Dorsolateral prefrontal cortex (tissue), 120 donors: ENCODE measurements at regions of chr12 and their contacts with region 1.

Region 1: GRCh38 chr12:124474709-124475108 is 92.7 kb downstream of the NCOR2 start:
- DNase-seq: peak; percentile 54 to 97 (median 94)
- H3K4me3 ChIP-seq: no peak overlapping the region
- H3K27ac ChIP-seq: peak overlapping the region; percentile 49 to 97 (median 90)
- H3K27me3 ChIP-seq: no peaks in the 10 kb centered on the region
- CTCF ChIP-seq: peak in 43 of 56 donors; percentile 15 to 64 (median 40)

Region 2: DNA sequence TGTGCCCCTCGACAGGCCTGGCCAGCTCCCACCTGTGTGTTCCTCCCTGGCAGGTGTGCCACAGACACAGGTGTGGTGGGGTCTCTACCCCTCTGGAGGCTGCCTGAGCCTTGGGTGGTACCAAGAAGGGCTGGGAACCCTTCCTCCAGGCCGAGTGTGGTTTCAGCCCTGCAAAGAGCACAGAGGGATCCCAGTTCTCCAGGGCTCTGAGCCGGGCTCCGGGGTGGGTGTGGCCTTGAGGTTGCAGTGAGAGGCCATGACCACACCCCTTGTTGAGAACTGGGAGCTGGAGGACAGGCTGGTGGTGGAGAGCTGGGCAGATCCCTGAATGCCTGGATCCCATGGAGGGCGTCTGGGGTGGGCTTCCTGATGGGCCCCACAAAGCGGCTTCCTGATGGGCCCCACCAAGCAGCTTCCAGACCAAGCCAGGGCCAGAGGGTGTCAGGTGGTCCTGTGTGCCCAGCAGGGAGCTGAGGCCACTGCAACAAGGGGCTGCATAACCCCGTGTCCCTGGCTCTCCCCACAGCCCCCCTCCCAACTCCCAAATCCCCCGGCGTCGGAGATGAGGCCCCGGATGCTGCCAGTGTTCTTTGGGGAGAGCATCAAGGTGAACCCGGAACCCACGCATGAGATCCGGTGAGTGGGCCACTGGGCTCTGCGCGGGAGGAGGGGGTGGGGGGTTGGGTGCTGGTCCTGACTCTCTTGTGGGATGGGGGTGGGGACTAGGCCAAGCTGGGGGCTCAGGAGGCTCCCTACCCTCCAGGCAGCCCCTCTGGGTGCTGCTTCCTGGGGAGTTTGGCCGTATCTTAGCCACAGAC is 163.2 kb before region 1 on chr12:
- intact Hi-C with region 1: no loop called
- DNase-seq: no peak
- H3K4me3 ChIP-seq: no peak overlapping the region
- H3K27ac ChIP-seq: no peak overlapping the region
- H3K27me3 ChIP-seq: no peaks in the 10 kb centered on the region
- CTCF ChIP-seq: no peak

Region 3: GRCh38 chr12:124490584-124491308 is 16.0 kb after region 1 on chr12:
- intact Hi-C with region 1: loop called in 1 of 2 experiments (anchors 1 kb)
- DNase-seq: peak; percentile 71 to 92 (median 76)
- H3K4me3 ChIP-seq: no peak overlapping the region
- H3K27ac ChIP-seq: peak overlapping the region in 45 of 59 donors; percentile 3 to 78 (median 51)
- H3K27me3 ChIP-seq: no peaks in the 10 kb centered on the region
- CTCF ChIP-seq: no peak

Region 4: GRCh38 chr12:124512667-124513296 is 38.1 kb after region 1 on chr12:
- intact Hi-C with region 1: loop called in 1 of 2 experiments (anchors 2 kb)
- DNase-seq: peak in 8 of 10 donors; percentile 72 to 86 (median 81)
- H3K4me3 ChIP-seq: peak overlapping the region in 19 of 59 donors; percentile 2 to 37 (median 17)
- H3K27ac ChIP-seq: peak overlapping the region; percentile 46 to 100 (median 89)
- H3K27me3 ChIP-seq: no peaks in the 10 kb centered on the region
- CTCF ChIP-seq: peak in 1 of 56 donors; percentile 14

Region 5: DNA sequence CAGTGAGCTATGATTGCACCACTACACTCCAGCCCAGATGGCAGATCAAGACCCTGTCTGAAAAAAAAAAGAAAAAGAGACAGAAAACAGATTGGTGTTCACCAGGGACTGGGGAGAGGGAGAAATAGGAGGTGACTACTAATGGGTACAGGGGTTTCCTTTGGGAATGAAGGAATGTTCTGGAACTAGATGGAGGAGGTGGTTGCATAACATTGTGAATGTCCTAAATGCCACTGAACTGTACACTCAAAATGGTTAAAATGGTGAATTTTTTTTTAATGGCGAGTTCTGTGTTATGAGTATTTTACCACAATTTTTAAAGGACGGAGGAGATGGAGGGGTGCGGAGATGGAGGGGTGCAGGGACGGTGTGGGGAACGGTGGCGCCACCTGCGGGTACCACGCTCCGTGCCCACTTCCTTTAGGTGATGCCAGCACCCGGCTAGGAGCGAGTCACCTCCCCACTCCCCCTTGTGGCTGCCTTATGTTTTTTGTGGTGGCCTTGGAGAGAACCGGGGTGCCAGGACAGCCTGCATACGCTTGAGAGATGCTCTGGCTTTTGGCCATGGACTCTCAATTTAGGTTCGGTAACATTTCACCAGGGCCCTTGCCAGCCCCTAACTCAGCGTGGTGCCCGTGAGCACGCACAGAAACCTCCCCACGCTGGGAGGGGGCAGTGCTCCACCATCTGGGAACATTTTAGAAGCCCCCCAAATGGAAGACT is 423.7 kb after region 1 on chr12:
- intact Hi-C with region 1: no loop called
- DNase-seq: peak in 9 of 10 donors; percentile 52 to 89 (median 76)
- H3K4me3 ChIP-seq: peak overlapping the region; percentile 7 to 65 (median 40)
- H3K27ac ChIP-seq: peak overlapping the region in 19 of 59 donors; percentile 2 to 75 (median 35)
- H3K27me3 ChIP-seq: no peaks in the 10 kb centered on the region
- CTCF ChIP-seq: peak in 55 of 56 donors; percentile 21 to 86 (median 68)

Region 6: DNA sequence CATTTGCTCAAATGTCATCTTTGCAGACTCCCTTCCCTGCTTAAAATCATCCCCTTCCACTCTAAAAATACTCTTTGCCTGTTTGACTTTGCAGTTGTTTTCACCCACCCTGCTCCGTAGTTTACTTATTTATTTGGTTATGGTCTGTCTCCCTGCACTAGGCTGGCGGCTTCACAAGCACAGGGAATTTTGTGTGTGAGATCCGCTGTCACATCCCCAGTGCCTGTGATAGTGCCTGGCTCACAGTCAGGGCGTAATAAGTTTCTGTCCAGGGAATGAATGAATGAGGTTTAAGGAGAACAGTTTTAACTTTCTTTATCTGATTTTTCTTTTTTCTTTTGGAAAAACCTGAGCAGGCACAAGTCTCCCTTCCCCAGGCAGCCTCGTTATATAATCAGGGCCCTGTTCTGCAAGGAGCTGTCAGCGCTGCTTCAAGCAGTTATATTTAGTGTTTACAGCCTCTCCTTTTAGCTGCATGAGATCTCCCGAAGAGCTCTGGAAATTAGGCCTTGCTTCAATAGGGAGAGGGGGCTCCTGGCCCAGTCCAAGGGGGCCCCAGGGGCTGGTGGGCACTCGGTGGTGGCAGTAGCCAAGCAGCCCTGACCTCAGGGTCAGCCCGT is 697.6 kb after region 1 on chr12:
- intact Hi-C with region 1: no loop called
- DNase-seq: peak in 3 of 10 donors; percentile 39 to 53 (median 43)
- H3K4me3 ChIP-seq: no peak overlapping the region
- H3K27ac ChIP-seq: peak overlapping the region in 57 of 59 donors; percentile 25 to 92 (median 80)
- H3K27me3 ChIP-seq: no peaks in the 10 kb centered on the region
- CTCF ChIP-seq: no peak

Region 7: GRCh38 chr12:126290456-126290855 is 1815.7 kb after region 1 on chr12:
- intact Hi-C with region 1: no loop called
- DNase-seq: no peak
- H3K4me3 ChIP-seq: no peak overlapping the region
- H3K27ac ChIP-seq: no peak overlapping the region
- H3K27me3 ChIP-seq: no peaks in the 10 kb centered on the region
- CTCF ChIP-seq: no peak